ENCODE measurements at regions of chr5 and their contacts with region 1.

Region 1: GRCh38 chr5:96984506-96985192 is 48.8 kb downstream of the LNPEP start:
- DNase-seq: no peak
- ATAC-seq: no peak
- H3K4me3 Mint-ChIP-seq: no peak overlapping the region
- H3K27ac Mint-ChIP-seq: no peak overlapping the region
- H3K4me1 Mint-ChIP-seq: peaks cover 28% of the 10 kb centered on the region
- H3K27me3 Mint-ChIP-seq: no peaks in the 10 kb centered on the region

Region 2: GRCh38 chr5:96952118-96952750 is 32.4 kb before region 1 on chr5:
- CTCF ChIA-PET with region 1: no interaction called
- POLR2A ChIA-PET with region 1: no interaction called
- DNase-seq: no peak
- ATAC-seq: no peak
- H3K4me3 Mint-ChIP-seq: no peak overlapping the region
- H3K27ac Mint-ChIP-seq: no peak overlapping the region
- H3K4me1 Mint-ChIP-seq: peaks cover 66% of the 10 kb centered on the region
- H3K27me3 Mint-ChIP-seq: no peaks in the 10 kb centered on the region

Region 3: GRCh38 chr5:96997265-96997859 is 12.7 kb after region 1 on chr5:
- CTCF ChIA-PET with region 1: interaction called, 19 read pairs
- POLR2A ChIA-PET with region 1: interaction called, 3 read pairs
- DNase-seq: peak; percentile 51
- ATAC-seq: peak; percentile 54
- H3K4me3 Mint-ChIP-seq: no peak overlapping the region
- H3K27ac Mint-ChIP-seq: no peak overlapping the region
- H3K4me1 Mint-ChIP-seq: peaks cover 43% of the 10 kb centered on the region
- H3K27me3 Mint-ChIP-seq: no peaks in the 10 kb centered on the region